OCI-LY7 (cell line): ENCODE measurements at regions of chr13 and their contacts with region 1.

Region 1: GRCh38 chr13:27644302-27644701 is 22.6 kb downstream of the POLR1D start:
- DNase-seq: no peak
- H3K4me3 ChIP-seq: no peak overlapping the region
- H3K27ac ChIP-seq: no peak overlapping the region
- H3K4me1 ChIP-seq: no peaks in the 10 kb centered on the region
- CTCF ChIP-seq: no peak

Region 2: DNA sequence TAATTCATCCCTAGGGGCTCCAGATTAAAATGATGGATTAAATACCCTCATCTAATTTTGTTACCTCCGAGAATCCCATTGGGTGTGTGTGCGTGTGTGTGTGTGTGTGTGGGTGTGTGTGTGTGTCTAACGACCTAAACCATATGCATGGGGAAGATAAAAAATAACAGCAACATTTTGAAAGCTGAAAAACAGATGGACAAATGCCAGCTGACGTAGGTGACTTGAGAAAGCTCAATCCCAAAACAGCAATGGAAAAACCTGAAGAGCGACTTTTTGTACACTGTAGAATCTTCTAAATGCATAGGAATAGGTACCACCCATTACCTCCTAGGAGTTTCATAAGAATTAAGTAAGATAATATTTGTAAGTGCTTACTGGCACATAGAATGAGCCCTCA is 401.6 kb before region 1 on chr13:
- CTCF ChIA-PET with region 1: no interaction called
- POLR2A ChIA-PET with region 1: no interaction called
- intact Hi-C with region 1: no loop called
- DNase-seq: no peak
- H3K4me3 ChIP-seq: no peak overlapping the region
- H3K27ac ChIP-seq: no peak overlapping the region
- H3K4me1 ChIP-seq: peaks cover 4% of the 10 kb centered on the region
- CTCF ChIP-seq: no peak

Region 3: DNA sequence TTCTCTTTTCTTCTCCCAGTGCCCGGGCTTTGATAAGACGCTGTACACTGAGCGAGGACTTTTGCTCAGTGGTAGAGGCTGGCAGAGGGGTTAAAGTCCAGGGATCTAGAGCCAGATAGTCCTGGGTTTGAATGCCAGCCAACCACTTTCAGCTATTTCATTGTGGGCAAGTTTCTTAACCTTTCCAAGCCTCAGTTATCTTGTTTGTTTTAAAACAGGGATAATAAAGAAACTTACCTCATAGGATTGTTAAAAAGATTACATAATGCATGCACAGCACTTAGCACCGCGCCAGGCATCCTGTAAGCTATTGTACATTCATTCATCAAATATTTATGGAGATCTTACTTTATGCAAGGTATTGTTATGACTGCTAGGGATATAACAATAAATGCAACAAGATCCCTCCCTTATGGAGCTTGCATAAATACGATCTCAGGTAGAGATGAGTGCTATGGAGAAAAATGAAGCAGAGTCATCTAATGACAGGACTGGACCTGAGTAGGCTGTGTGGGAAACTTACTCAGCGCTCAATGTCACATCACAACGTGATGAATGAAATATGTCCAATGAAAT is 94.8 kb before region 1 on chr13:
- CTCF ChIA-PET with region 1: no interaction called
- POLR2A ChIA-PET with region 1: no interaction called
- intact Hi-C with region 1: loop called (anchors 10 kb)
- DNase-seq: no peak
- H3K4me3 ChIP-seq: no peak overlapping the region
- H3K27ac ChIP-seq: no peak overlapping the region
- H3K4me1 ChIP-seq: peaks cover 7% of the 10 kb centered on the region
- CTCF ChIP-seq: no peak

Region 4: GRCh38 chr13:27654816-27655215 is 10.5 kb after region 1 on chr13:
- CTCF ChIA-PET with region 1: interaction called, 3 read pairs
- POLR2A ChIA-PET with region 1: interaction called, 13 read pairs
- intact Hi-C with region 1: no loop called
- DNase-seq: no peak
- H3K4me3 ChIP-seq: no peak overlapping the region
- H3K27ac ChIP-seq: no peak overlapping the region
- H3K4me1 ChIP-seq: no peaks in the 10 kb centered on the region
- CTCF ChIP-seq: no peak